CD4-positive, alpha-beta T cell (primary cell): ENCODE measurements at regions of chr1 and their contacts with region 1.

Region 1: DNA sequence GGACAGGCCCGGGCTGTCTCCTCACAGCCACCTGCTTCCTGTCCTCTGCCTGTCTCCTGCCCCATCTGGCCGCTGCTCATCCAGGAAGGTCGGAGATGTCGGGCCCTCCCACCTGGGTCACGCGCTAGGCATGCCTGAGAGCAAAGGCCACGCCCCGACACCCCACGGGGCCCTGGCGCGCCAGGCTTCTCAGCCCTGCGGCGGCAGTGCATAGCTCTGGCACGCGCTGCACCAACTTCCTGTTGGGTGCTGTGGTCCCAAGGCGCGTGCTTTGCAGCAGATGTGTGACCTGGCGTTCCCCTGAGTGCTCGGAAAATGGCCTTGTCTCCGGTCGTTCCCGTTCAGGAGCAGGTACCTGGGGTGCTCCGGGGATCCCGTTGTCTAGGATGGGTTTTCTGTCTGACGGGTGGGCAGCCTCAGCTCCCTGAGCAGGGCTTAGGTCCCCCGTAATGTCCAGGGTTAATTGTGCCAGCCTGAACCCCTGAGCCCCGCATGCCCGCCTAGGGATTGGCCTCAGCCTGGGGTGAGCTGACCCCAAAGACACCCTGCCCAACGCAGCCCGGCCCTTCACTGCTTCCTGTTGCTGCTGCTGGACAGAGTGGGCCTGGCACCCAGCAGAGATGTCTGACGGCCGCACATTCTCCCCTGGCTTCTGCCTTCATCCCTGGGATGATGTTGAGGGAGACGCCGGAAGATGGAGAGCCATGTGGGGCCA is 19.4 kb upstream of the KCNAB2 start:
- DNase-seq: peak; percentile 82 to 98 (median 93)
- ATAC-seq: peak; percentile 81
- H3K4me3 ChIP-seq: peak overlapping the region; percentile 68
- H3K4me3 Mint-ChIP-seq: peak overlapping the region; percentile 83
- H3K27ac ChIP-seq: peak overlapping the region; percentile 86 to 95
- H3K27ac Mint-ChIP-seq: peak overlapping the region; percentile 92
- H3K4me1 ChIP-seq: peaks cover 62% of the 10 kb centered on the region
- H3K4me1 Mint-ChIP-seq: peaks cover 47% of the 10 kb centered on the region
- H3K27me3 ChIP-seq: no peaks in the 10 kb centered on the region
- H3K27me3 Mint-ChIP-seq: no peaks in the 10 kb centered on the region
- CTCF ChIP-seq: no peak

Region 2: DNA sequence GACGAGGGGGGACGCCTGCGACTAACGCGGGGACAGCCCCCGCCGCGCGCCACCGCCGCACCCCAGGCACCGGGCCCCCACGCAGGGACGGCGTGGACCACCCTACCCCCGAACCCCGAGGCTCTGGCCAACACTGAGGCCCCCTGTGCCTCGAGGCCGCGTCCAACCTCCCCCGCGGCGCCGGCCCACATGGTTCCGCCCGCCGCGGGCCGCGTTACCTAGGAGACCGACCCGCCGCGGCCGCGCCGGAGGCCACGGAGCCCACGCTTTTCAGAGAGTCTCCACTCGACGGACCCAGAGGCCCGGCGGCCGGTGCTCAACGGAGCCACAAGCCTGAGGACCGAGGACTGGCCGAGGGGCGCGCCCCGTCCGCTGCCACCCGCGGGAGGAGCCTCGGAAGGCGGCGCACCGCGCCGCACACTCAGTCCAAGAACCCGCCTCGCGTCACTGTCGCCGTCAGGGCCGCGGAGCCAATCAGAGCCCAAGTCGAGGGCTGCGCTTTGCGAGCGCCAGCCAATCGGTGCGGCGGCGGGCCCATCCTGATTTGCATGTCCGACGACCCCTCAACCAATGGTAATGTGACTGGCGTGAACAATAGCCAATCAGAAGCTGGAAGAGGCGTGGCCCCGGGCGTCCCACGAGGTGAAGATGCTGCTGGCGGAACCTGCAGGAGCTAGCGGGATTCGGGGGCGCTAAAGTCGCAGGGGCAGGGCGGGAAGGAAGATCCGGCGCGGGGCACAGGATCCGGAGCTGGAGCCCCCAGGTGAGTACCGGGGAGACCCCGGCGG is 34.0 kb before region 1 on chr1 and contains the start of gene NPHP4:
- CTCF ChIA-PET with region 1: interaction called, 4 read pairs
- POLR2A ChIA-PET with region 1: interaction called, 92 read pairs
- intact Hi-C with region 1: loop called (anchors 1 kb)
- DNase-seq: peak; percentile 97 to 100 (median 99)
- ATAC-seq: peak; percentile 89
- H3K4me3 ChIP-seq: peak within 1 kb of the TSS; percentile 76
- H3K4me3 Mint-ChIP-seq: peak within 1 kb of the TSS; percentile 95
- H3K27ac ChIP-seq: peak within 1 kb of the TSS; percentile 73 to 92
- H3K27ac Mint-ChIP-seq: peak within 1 kb of the TSS; percentile 94
- H3K4me1 ChIP-seq: peaks cover 46% of the 10 kb centered on the region
- H3K4me1 Mint-ChIP-seq: peaks cover 34% of the 10 kb centered on the region
- H3K27me3 ChIP-seq: no peaks in the 10 kb centered on the region
- H3K27me3 Mint-ChIP-seq: no peaks in the 10 kb centered on the region
- CTCF ChIP-seq: no peak
- total RNA-seq, gene NPHP4: 6.2 to 7.7 TPM

Region 3: DNA sequence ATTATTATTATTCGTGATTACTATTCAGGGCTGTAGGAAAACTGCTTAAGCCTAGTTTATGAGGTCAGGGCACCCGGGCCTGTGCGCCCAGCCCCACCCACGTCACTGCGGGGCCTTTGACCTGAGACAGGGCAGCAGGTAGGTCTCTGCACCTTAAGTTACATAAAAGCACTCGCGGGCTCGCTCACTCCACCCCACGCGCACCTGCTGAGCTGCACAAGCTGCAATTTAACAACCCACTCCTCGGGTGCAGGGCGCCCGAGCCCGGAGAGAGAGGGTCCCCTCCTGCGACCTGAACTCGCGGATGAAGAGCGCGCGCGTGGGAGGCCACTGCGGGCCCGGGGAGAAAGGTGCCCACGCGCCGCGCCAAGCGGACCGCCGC is 209.0 kb after region 1 on chr1:
- CTCF ChIA-PET with region 1: no interaction called
- POLR2A ChIA-PET with region 1: no interaction called
- intact Hi-C with region 1: loop called in 1 of 2 experiments (anchors 10 kb)
- DNase-seq: peak in 3 of 14 experiments; percentile 30 to 49 (median 35)
- ATAC-seq: peak; percentile 17
- H3K4me3 ChIP-seq: peak overlapping the region; percentile 81
- H3K4me3 Mint-ChIP-seq: peak overlapping the region; percentile 94
- H3K27ac ChIP-seq: no peak overlapping the region
- H3K27ac Mint-ChIP-seq: peak overlapping the region; percentile 64
- H3K4me1 ChIP-seq: peaks cover 18% of the 10 kb centered on the region
- H3K4me1 Mint-ChIP-seq: peaks cover 15% of the 10 kb centered on the region
- H3K27me3 ChIP-seq: peaks cover 5% of the 10 kb centered on the region in 2 experiments
- H3K27me3 Mint-ChIP-seq: peaks cover 13% of the 10 kb centered on the region
- CTCF ChIP-seq: no peak